AG04449 (cell line): ENCODE measurements at regions of chr1 and their contacts with region 1.

Region 1: DNA sequence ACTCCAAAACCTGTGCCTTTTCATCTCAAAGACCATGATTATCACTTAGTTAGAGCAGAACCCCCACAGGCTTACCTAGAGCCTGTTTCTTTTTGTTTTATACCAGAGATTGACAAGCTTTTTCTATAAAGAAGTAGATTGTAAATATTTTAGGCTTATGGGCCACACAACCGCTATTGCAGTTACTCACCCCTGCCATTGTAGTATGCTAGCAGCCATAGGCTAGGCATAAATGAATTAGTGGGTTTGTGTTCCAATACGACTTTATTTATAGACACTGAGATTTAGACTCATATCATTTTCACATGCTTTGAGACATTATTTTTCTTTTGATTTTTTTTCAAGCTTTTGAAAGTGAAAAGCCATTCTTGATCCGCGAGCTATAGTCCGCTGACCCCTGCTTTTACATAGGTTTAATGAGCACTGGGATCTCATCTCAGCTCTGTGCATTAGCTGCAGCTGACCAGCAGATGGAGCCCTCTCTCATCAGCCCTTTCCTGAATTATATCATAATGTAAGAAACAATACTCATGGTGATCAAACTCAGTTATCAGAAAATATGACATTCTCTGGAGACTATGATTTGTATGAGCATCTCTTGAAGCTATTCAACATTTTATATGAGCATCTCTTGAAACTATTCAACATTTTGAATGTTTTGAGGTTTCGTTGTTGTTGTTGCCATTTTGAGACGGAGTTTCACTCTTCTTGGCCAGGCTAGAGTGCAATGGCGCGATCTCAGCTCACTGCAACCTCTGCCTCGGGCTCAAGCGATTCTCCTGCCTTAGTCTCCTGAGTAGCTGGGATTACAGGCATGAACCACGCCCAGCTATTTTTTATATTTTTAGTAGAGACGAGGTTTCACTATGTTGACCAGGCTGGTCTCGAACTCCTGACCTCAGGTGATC is 111.9 kb upstream of the L1TD1 start:
- DNase-seq: no peak
- H3K4me3 ChIP-seq: no peak overlapping the region
- CTCF ChIP-seq: peak; percentile 84

Region 2: DNA sequence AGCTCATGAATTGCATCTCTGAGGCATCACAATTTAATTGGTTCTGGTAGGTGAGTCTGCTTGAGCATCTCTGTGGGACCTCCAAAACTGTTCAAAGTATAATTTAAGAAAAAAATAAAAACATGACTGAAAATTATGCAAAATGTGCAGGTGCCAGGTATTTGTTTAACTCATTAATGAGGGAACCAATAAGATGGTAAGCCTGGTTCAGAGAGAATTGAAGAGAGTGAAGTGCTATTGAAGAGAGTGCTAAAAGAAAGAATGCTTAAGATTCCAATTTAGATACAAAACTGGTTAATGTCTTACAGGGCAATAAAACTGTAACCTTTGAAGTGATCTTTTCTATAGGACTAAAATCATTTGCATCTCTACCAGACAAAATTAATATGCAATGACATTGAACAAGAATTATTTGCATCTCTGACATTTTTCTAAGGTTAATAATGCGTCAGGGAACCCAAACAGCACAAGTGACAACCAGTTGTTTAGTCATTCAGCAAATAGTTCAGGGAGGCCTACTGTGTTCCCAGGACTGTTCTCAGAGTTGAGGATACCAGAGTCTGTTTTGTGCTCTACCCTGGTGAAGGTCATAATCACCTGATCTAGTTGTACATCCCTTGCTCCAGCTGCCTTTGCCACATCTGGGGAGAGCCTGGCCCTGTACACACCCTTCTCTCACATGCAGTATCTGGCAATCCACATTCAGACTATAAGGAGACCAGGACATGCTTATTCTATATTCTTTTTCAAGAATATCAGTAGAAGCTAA is 156.9 kb before region 1 on chr1:
- CTCF ChIA-PET with region 1: no interaction called
- POLR2A ChIA-PET with region 1: no interaction called
- DNase-seq: no peak
- H3K4me3 ChIP-seq: no peak overlapping the region
- CTCF ChIP-seq: no peak

Region 3: DNA sequence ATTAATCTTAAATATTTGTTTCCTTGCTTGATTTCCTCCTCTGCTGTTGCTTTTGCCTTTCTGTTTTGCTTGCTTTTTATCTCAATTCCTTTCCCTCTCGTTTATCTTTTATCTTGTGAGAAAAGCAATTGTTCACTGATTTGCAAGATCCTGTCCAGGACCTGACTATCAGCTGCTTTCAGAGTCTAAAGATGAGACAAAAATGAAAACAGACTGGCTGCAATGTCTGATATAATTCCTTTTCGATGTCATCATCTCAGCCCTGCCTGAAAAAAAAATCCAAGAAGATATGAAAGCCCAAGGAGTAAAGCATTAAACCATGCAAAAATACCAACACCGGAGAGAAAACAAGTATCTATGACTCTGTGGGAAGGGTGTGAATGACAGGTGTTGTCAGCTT is 115.0 kb before region 1 on chr1:
- CTCF ChIA-PET with region 1: no interaction called
- POLR2A ChIA-PET with region 1: no interaction called
- DNase-seq: no peak
- H3K4me3 ChIP-seq: no peak overlapping the region
- CTCF ChIP-seq: no peak

Region 4: DNA sequence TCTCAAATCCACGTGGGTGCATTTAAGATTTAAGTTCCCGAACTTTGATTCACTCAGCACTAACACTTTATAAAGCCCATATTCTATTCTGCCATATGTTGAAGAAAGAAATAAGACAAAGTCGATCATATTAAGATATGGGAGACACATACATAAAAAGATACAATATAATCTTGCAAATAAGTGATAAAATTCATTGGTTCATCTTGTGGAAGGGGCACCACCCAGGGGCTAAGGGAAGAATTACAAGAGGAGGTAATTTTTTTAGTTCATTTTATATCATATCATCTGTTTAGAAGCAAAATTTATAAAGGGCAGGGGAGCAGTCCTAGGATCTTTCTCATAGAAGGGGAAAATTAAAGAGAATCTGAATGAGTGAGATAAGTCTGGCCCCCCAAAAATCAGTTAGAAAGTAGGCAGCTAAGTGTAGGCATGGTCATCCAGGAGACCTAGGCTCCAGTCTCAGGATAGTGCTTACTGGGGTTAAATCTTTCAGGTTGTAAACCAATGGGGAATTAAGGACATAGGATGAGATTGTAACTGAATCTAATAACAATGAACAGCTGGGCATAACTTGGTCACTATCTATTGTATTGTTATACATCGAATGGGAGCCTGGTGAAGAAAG is 12.2 kb before region 1 on chr1:
- CTCF ChIA-PET with region 1: interaction called, 22 read pairs
- POLR2A ChIA-PET with region 1: no interaction called
- DNase-seq: peak; percentile 10
- H3K4me3 ChIP-seq: no peak overlapping the region
- CTCF ChIP-seq: peak; percentile 43

Region 5: GRCh38 chr1:62093261-62093660 is 10.6 kb after region 1 on chr1:
- CTCF ChIA-PET with region 1: interaction called, 21 read pairs
- POLR2A ChIA-PET with region 1: no interaction called
- DNase-seq: no peak
- H3K4me3 ChIP-seq: no peak overlapping the region
- CTCF ChIP-seq: no peak

Region 6: GRCh38 chr1:62117018-62117750 is 34.5 kb after region 1 on chr1:
- CTCF ChIA-PET with region 1: interaction called, 12 read pairs
- POLR2A ChIA-PET with region 1: no interaction called
- DNase-seq: no peak
- H3K4me3 ChIP-seq: no peak overlapping the region
- CTCF ChIP-seq: no peak

Region 7: DNA sequence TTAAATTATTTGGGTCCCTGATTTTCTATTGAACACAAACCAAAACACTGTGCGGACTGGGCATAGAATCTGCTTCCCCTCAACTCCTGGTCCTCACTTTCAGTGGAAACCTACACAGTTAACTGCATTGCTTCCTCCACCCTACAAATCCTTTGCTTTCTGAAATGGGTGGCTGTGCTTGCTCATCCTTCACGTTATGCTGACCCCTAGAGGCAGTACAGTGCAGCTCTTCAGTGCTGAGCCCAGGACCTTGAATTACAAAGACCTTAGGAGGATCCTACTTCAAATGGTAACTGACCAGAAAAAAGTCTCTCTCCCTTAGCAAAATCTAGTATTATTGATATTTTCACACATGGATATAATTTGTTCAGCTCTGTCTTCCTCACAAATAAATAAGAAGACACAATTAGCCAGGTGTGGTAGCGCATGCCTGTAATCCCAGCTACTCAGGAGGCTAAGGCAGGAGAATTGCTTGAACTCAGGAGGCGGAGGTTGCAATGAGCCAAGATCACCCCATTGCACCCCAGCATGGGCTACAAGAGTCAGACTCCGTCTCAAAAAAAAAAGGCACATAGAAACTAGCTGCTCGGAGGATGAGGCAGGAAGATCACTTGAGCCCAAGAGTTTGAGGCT is 48.5 kb after region 1 on chr1:
- CTCF ChIA-PET with region 1: interaction called, 98 read pairs
- POLR2A ChIA-PET with region 1: no interaction called
- DNase-seq: no peak
- H3K4me3 ChIP-seq: no peak overlapping the region
- CTCF ChIP-seq: peak; percentile 91

Region 8: GRCh38 chr1:62144238-62144831 is 61.6 kb after region 1 on chr1:
- CTCF ChIA-PET with region 1: interaction called, 35 read pairs
- POLR2A ChIA-PET with region 1: no interaction called
- DNase-seq: no peak
- H3K4me3 ChIP-seq: no peak overlapping the region
- CTCF ChIP-seq: peak; percentile 65

Region 9: DNA sequence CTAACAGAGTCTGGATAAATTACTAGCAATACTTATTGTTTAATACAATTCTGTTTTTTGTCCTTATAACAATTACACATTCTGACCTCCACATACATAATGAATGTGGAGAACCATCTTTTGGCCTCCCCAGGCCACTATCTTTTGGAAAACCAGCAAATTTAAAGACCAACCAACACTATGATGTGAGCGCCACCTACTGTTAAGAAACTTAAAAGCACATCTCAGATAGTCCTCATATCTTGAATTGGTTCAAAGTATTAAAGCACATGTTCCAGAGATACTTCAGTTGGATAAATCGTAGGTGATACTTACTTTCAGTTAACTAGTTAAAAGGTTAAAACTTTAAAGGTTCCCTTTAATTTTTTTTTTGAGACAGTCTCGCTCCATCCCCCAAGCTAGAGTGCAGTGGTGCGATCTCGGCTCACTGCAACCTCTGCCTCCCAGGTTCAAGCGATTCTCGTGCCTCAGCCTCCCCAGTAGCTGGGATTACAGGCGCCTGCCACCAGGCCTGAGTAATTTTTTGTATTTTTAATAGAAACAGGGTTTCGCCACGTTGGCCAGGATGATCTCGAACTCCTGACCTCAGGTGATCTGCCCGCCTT is 324.8 kb after region 1 on chr1:
- CTCF ChIA-PET with region 1: interaction called, 10 read pairs
- POLR2A ChIA-PET with region 1: no interaction called
- DNase-seq: peak; percentile 12
- H3K4me3 ChIP-seq: no peak overlapping the region
- CTCF ChIP-seq: peak; percentile 58